Vagina (tissue), 2 donors: ENCODE measurements at regions of chr19 and their contacts with region 1.

Region 1: GRCh38 chr19:18440415-18440877 is 2.5 kb upstream of the ISYNA1 start:
- DNase-seq: no peak
- H3K4me3 ChIP-seq: no peak overlapping the region
- H3K27ac ChIP-seq: no peak overlapping the region
- H3K4me1 ChIP-seq: peaks cover 36% of the 10 kb centered on the region
- H3K27me3 ChIP-seq: no peaks in the 10 kb centered on the region
- CTCF ChIP-seq: no peak
- POLR2A ChIP-seq: no peak

Region 2: GRCh38 chr19:18675779-18676178 is 235.3 kb after region 1 on chr19:
- intact Hi-C with region 1: loop called (anchors 10 kb)
- DNase-seq: no peak
- H3K4me3 ChIP-seq: no peak overlapping the region
- H3K27ac ChIP-seq: no peak overlapping the region
- H3K4me1 ChIP-seq: peaks cover 23% of the 10 kb centered on the region
- H3K27me3 ChIP-seq: no peaks in the 10 kb centered on the region
- CTCF ChIP-seq: no peak
- POLR2A ChIP-seq: no peak